Heart right ventricle (tissue), 16 donors: ENCODE measurements at regions of chr19 and their contacts with region 1.

Region 1: GRCh38 chr19:10289167-10289835 is 451 bp upstream of the ICAM5 start:
- DNase-seq: no peak
- ATAC-seq: no peak
- H3K4me3 ChIP-seq: peak overlapping the region in 9 of 10 donors; percentile 25 to 56 (median 41)
- H3K27ac ChIP-seq: no peak overlapping the region
- H3K4me1 ChIP-seq: peaks cover 23 to 93% (median 77%) of the 10 kb centered on the region in 9 donors
- H3K27me3 ChIP-seq: peaks cover 25 to 75% (median 72%) of the 10 kb centered on the region in 7 donors
- CTCF ChIP-seq: no peak

Region 2: DNA sequence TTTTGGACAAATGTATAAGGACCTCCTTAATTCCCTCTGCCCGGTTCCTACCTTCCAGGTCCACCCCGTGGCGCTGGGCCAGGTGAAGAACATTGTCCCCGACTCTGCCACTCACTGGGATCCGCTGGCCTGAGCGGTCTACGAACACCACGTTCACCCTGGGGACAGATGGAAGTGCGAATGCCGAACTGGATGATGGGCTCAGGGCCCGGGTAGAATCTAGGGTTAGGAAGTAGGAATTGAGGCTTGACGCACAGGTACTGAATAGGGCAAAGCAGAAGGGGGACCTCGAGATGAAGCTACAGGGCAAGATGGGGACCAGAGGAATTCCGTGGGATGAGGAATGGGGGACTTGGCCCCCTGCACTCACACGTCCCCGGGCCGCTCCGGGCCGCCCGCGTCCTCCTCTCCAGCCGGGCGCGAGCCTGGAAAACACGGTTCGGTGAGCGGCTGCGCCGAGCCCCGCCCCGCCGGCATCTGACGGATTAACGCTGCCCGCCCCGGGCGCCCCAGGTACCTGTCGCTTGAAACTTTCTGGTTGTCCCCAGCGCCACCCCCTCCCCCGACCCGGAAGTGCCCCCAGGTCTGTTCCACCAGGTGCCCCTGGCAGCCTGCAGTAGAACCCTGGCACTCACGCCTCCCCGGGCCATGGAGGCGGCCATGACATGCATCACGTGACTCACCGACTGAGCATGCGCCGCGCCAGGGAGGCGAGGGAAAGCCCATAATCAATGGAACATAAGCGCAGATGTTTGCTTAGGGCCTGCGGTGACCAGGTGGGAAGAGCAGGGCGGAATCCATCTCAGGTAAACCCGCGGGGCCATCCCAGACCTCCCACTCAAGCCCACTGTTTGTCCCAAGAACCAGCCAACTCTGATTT is 26.3 kb after region 1 on chr19 and contains the start of gene FDX2:
- intact Hi-C with region 1: loop called in 1 of 10 experiments (anchors 2 kb)
- DNase-seq: peak; percentile 88 to 92
- ATAC-seq: peak; percentile 88 to 97 (median 94)
- H3K4me3 ChIP-seq: peak within 1 kb of the TSS; percentile 61 to 98 (median 90)
- H3K27ac ChIP-seq: peak within 1 kb of the TSS in 9 of 10 donors; percentile 30 to 81 (median 66)
- H3K4me1 ChIP-seq: peaks cover 4 to 22% (median 17%) of the 10 kb centered on the region in 9 donors
- H3K27me3 ChIP-seq: no peaks in the 10 kb centered on the region
- CTCF ChIP-seq: no peak
- total RNA-seq, gene FDX2: 11.7 to 21.8 (median 17.1) TPM

Region 3: GRCh38 chr19:10327793-10328192 is 38.5 kb after region 1 on chr19:
- intact Hi-C with region 1: loop called in 2 of 10 experiments (anchors 5 kb)
- DNase-seq: no peak
- ATAC-seq: no peak
- H3K4me3 ChIP-seq: no peak overlapping the region
- H3K27ac ChIP-seq: no peak overlapping the region
- H3K4me1 ChIP-seq: peaks cover 4 to 14% (median 13%) of the 10 kb centered on the region in 9 donors
- H3K27me3 ChIP-seq: no peaks in the 10 kb centered on the region
- CTCF ChIP-seq: no peak

Region 4: GRCh38 chr19:11460207-11460606 is 1170.9 kb after region 1 on chr19:
- intact Hi-C with region 1: no loop called
- DNase-seq: no peak
- ATAC-seq: no peak
- H3K4me3 ChIP-seq: no peak overlapping the region
- H3K27ac ChIP-seq: no peak overlapping the region
- H3K4me1 ChIP-seq: no peaks in the 10 kb centered on the region
- H3K27me3 ChIP-seq: peaks cover 0 to 23% (median 16%) of the 10 kb centered on the region in 7 donors
- CTCF ChIP-seq: peak in 3 of 9 donors; percentile 7 to 25 (median 10)